ENCODE measurements at regions of chr3 and their contacts with region 1.

Region 1: DNA sequence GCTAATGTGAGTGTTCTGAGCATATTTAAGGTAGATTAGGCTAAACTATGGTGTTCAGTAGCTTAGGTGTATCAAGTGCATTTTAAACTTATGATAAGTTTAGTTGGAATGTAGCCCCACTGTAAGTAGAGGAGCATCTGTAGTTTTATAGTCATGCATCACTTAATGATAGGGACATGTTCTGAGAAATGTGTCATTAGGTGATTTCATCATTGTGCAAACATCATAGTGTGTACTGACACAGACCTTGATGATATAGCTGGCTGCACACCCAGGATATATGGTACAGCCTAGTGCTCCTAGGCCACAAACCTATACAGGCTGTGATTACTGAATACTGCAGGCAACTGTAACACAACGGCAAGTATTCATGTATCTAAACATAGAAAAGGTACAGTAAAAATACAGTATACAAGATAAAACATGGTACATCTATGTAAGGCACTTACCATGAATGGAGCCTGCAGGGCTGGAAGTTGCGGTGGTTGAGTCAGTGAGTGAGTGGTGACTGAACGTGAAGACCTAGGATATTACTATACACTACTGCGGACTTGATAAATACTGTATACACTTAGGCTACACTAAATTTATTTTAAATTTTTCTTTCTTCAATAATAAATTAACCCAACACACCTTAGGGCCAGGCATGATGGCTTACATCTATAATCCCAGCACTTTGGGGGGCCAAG is 17.9 kb downstream of the DNAH1 start:
- DNase-seq: no peak
- ATAC-seq: peak in 1 of 4 donors; percentile 85
- H3K4me3 ChIP-seq: no peak overlapping the region
- H3K27ac ChIP-seq: no peak overlapping the region
- H3K4me1 ChIP-seq: no peaks in the 10 kb centered on the region
- H3K27me3 ChIP-seq: no peaks in the 10 kb centered on the region
- CTCF ChIP-seq: no peak
- POLR2A ChIP-seq: no peak

Region 2: GRCh38 chr3:52225452-52226228 is 108.4 kb before region 1 on chr3 and contains the start of gene TLR9:
- intact Hi-C with region 1: loop called in 1 of 2 experiments (anchors 5 kb)
- DNase-seq: peak in 2 of 3 donors; percentile 18 to 36
- ATAC-seq: peak in 2 of 4 donors; percentile 7 to 8
- H3K4me3 ChIP-seq: no peak within 1 kb of the TSS
- H3K27ac ChIP-seq: no peak within 1 kb of the TSS
- H3K4me1 ChIP-seq: no peaks in the 10 kb centered on the region
- H3K27me3 ChIP-seq: no peaks in the 10 kb centered on the region
- CTCF ChIP-seq: no peak
- POLR2A ChIP-seq: no peak
- total RNA-seq, gene TLR9: 0.12 to 0.59 (median 0.24) TPM in 4 of 6 experiments, not detected in the others

Region 3: GRCh38 chr3:52278510-52279069 is 55.4 kb before region 1 on chr3 and contains the start of gene WDR82:
- intact Hi-C with region 1: no loop called
- DNase-seq: peak; percentile 98 to 99 (median 99)
- ATAC-seq: peak; percentile 87 to 95 (median 90)
- H3K4me3 ChIP-seq: peak within 1 kb of the TSS; percentile 84 to 97 (median 90)
- H3K27ac ChIP-seq: peak within 1 kb of the TSS; percentile 97
- H3K4me1 ChIP-seq: peaks cover 0 to 54% (median 18%) of the 10 kb centered on the region in 4 donors
- H3K27me3 ChIP-seq: no peaks in the 10 kb centered on the region
- CTCF ChIP-seq: peak; percentile 36 to 43 (median 40)
- POLR2A ChIP-seq: peak; percentile 94
- total RNA-seq, gene WDR82: 14.1 to 25.2 (median 20.7) TPM